ENCODE measurements at regions of chr14 and their contacts with region 1.

Region 1: DNA sequence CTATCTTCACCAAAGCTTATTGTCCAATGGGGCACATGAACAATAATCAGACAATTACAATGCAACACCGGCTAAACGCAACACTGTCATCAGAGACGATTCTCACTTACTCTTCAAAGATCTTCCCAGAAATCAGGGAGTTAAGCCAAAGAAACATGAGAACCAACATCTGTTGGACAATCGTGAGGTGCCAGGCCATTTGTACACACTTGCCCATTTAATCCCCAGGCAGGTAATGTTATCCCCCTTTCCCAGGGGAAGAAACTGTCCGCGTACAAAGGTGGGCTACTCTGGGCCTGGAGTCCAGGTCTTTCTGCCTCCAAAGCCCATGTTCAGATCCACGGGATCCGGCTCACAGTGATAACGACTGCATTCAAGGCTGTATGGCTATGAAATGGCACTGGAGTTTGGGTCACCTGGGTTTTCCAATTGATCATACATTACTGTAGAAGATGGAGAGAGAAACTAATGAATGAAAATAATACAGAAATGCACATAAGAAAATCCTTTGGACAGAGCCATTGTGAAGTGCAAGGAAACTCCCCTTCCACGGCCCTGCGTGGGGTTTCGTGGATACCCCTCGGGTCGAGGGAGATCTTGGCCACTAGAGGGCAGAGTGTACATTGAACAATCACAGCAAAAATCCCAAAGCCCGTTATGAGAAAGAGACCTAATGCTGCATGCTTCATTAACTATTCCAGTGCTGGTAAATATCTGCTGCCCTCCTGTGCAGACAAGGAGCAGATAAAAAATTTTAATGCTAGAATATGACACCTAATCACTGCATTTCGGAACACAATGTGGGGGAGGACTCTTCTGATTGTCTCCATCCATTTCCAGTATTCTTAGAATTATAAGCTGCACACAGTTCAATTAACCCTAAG is 111.4 kb downstream of the EGLN3 start:
- DNase-seq: no peak
- ATAC-seq: peak; percentile 84
- H3K4me3 ChIP-seq: no peak overlapping the region
- H3K27ac ChIP-seq: no peak overlapping the region
- H3K4me1 ChIP-seq: no peaks in the 10 kb centered on the region
- H3K27me3 ChIP-seq: peaks cover 0 to 3% of the 10 kb centered on the region in 2 experiments; a peak in 1 of 4 replicates
- CTCF ChIP-seq: peak; percentile 73 to 85 (median 77)
- EP300 ChIP-seq: no peak
- POLR2A ChIP-seq: no peak
- RAD21 ChIP-seq: peak; percentile 79

Region 2: DNA sequence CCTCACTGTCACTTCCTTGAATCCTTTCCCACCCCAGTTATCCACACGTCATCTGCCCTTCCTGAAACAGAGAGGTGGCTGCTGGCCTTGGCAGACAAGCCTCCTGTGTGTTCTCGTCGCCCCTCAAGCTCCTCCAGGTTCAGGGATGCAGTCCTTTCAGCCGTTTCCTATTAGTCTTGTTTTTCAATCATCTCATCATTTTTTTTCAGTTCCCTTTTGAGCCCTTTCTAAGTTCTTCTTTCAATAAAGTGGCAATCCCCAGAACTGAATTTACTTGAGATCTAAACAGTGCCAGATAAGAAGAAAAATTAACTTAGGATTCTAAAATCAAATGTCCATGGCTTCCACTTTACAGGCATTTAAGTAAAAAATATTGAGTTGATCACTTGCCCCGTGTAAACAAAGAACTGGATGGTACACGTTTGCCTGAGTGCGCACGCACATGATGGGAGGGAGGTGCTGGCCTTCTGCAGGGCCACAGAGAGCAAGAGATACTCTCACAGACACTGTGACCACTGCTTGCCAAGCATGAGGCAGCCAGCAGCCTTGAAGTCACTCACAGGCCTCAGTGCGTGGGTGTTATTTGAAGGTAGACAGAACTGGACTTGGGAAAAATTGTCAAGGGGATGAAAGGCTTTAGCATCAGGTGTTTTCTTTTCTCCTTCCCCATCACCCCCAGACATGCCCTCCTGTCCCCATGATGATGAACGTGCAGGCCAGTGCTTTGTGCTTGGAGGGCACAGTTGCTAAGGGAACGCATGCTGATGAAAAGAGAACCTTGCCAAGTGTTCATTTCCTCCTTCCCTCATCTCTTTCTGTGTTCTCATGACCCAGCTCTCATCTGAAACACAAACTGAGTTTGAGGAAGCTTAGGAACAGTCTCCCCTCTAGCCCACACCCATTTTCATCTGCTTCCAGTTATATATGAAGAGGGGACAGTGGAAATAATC is 296.8 kb before region 1 on chr14:
- CTCF ChIA-PET with region 1: no interaction called
- POLR2A ChIA-PET with region 1: no interaction called
- RAD21 ChIA-PET with region 1: no interaction called
- SMC1A ChIA-PET with region 1: no interaction called
- in situ Hi-C with region 1: no loop called
- intact Hi-C with region 1: no loop called
- DNase-seq: no peak
- ATAC-seq: peak; percentile 63
- H3K4me3 ChIP-seq: no peak overlapping the region
- H3K27ac ChIP-seq: no peak overlapping the region
- H3K4me1 ChIP-seq: peaks cover 5% of the 10 kb centered on the region; the same call in 1 of the 2 replicates
- H3K27me3 ChIP-seq: no peaks in the 10 kb centered on the region
- CTCF ChIP-seq: no peak
- EP300 ChIP-seq: no peak
- POLR2A ChIP-seq: no peak
- RAD21 ChIP-seq: no peak

Region 3: GRCh38 chr14:33764876-33765650 is 74.4 kb before region 1 on chr14:
- CTCF ChIA-PET with region 1: no interaction called
- POLR2A ChIA-PET with region 1: no interaction called
- RAD21 ChIA-PET with region 1: no interaction called
- SMC1A ChIA-PET with region 1: no interaction called
- in situ Hi-C with region 1: no loop called
- intact Hi-C with region 1: no loop called
- DNase-seq: no peak
- ATAC-seq: no peak
- H3K4me3 ChIP-seq: no peak overlapping the region
- H3K27ac ChIP-seq: no peak overlapping the region
- H3K4me1 ChIP-seq: no peaks in the 10 kb centered on the region
- H3K27me3 ChIP-seq: no peaks in the 10 kb centered on the region
- CTCF ChIP-seq: no peak
- EP300 ChIP-seq: no peak
- POLR2A ChIP-seq: no peak
- RAD21 ChIP-seq: no peak

Region 4: DNA sequence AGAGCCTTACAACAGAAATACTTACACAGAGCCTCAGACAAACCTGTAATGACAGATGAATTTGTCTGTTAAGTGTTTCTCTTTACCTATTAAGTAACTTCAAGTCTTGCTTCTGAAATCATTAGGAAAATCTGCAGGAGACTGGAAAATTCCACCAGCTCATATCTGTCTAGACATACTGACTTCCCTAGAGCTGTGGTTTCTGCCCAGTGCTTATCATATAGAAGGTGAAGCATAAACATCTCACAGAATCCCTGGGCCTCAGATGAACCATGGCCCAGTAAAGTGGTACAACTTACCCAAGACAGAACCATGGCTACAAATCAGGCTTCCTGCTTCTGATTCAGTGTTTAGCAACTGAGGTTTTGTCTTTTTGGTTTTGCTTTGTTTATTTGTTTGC is 19.9 kb after region 1 on chr14:
- CTCF ChIA-PET with region 1: interaction called, 12 read pairs
- POLR2A ChIA-PET with region 1: no interaction called
- RAD21 ChIA-PET with region 1: interaction called, 9 read pairs
- SMC1A ChIA-PET with region 1: interaction called, 13 read pairs
- in situ Hi-C with region 1: no loop called
- intact Hi-C with region 1: no loop called
- DNase-seq: no peak
- ATAC-seq: peak; percentile 28; the same call in 1 of the 3 replicates
- H3K4me3 ChIP-seq: no peak overlapping the region
- H3K27ac ChIP-seq: no peak overlapping the region
- H3K4me1 ChIP-seq: peaks cover 3% of the 10 kb centered on the region; the same call in 1 of the 2 replicates
- H3K27me3 ChIP-seq: no peaks in the 10 kb centered on the region
- CTCF ChIP-seq: no peak
- EP300 ChIP-seq: no peak
- POLR2A ChIP-seq: no peak
- RAD21 ChIP-seq: no peak

Region 5: GRCh38 chr14:33938131-33938949 is 98.9 kb after region 1 on chr14:
- CTCF ChIA-PET with region 1: interaction called, 7 read pairs
- POLR2A ChIA-PET with region 1: no interaction called
- RAD21 ChIA-PET with region 1: interaction called, 15 read pairs
- SMC1A ChIA-PET with region 1: interaction called, 12 read pairs
- in situ Hi-C with region 1: no loop called
- intact Hi-C with region 1: no loop called
- DNase-seq: peak; percentile 36
- ATAC-seq: no peak
- H3K4me3 ChIP-seq: no peak overlapping the region; the same call in 1 of the 2 replicates
- H3K27ac ChIP-seq: no peak overlapping the region
- H3K4me1 ChIP-seq: no peaks in the 10 kb centered on the region
- H3K27me3 ChIP-seq: no peaks in the 10 kb centered on the region
- CTCF ChIP-seq: no peak
- EP300 ChIP-seq: no peak
- POLR2A ChIP-seq: no peak
- RAD21 ChIP-seq: no peak

Region 6: DNA sequence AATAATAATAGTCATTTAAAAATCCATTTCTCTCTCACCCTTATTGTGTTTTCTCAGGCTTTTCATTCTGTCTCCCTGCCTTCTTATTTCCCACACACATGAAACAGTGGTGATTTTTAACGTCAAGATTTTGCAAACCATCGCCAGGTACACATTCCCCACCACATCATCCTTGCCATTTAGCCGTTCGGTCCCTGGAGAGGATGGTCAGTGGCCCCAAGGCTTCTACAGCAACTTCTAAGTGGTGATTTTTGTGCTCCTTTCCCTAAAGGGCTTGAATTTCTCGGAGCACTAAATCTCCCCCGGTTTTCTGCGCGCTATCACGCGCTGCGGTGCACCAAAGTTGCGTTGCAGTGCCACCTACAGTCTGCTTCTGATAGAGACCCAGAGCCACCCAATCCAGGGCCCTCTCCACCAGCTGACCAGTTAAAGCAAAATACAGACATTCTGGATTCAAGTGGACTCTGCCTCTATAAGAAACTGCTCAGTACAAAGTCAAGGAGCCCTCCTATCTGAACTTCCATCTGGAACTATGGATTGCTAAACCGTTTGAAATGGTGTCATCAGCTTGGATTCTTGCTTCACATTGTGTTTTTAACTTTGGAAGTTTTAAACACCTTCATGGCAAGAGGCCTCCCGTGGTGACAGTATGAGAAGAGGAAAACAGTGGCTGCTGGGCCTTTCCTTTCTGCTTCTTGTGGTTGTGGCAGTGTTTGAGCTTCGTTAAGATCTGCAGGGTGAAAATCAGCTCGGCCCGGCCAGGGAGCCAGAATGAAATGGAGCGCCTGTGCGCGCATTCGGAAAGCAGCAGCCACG is 388.6 kb after region 1 on chr14:
- CTCF ChIA-PET with region 1: interaction called, 196 read pairs
- POLR2A ChIA-PET with region 1: no interaction called
- RAD21 ChIA-PET with region 1: interaction called, 42 read pairs
- SMC1A ChIA-PET with region 1: interaction called, 52 read pairs
- in situ Hi-C with region 1: loop called (anchors 5 kb)
- intact Hi-C with region 1: loop called (anchors 1 kb)
- DNase-seq: no peak
- ATAC-seq: peak; percentile 96
- H3K4me3 ChIP-seq: no peak overlapping the region
- H3K27ac ChIP-seq: no peak overlapping the region
- H3K4me1 ChIP-seq: no peaks in the 10 kb centered on the region
- H3K27me3 ChIP-seq: peaks cover 0 to 2% of the 10 kb centered on the region in 2 experiments; a peak in 1 of 4 replicates
- CTCF ChIP-seq: peak; percentile 71 to 78 (median 72); a peak in 5 of 6 replicates
- EP300 ChIP-seq: no peak
- POLR2A ChIP-seq: no peak
- RAD21 ChIP-seq: peak; percentile 81

Region 7: DNA sequence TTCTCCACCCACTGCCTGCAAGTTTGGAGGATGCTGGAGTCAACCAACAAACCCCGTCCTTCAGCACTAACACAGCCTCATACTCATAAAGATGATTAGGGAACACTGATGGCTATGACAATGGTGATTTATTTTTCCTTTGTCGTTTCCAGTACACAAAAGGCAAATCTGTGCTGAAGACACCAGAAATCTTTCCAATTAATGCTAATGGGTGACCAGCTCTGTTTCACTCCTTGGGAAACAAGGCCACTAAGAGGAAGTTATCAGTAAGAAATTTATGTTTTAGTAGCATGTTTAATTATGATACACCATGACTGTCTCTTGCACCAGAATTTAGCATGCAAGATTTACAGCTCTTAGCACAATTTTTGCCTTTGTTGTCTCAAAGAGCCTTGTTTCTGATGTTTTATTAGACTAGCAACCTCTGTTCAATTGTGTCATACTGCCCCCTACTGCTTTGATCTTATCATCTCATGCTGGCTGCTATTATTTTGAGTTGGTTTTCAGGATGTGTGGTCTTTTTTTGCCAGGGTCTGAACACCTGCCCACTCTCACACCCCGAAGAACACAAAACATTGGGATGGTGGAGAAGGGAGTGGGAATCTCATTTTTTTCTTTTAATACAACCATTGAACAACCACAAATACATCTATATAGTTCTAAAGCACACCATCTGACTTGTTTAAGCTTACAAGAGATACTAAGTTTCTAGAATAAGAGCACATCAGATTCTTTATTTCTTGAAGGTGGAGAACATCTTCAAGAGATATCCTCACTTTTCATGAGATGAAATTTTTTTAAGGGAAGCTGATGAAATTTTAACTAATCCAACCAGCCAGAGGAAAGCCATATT is 461.7 kb after region 1 on chr14:
- CTCF ChIA-PET with region 1: interaction called, 76 read pairs
- POLR2A ChIA-PET with region 1: no interaction called
- RAD21 ChIA-PET with region 1: interaction called, 18 read pairs
- SMC1A ChIA-PET with region 1: interaction called, 12 read pairs
- in situ Hi-C with region 1: loop called (anchors 5 kb)
- intact Hi-C with region 1: loop called (anchors 2 kb)
- DNase-seq: peak; percentile 7
- ATAC-seq: peak; percentile 67
- H3K4me3 ChIP-seq: no peak overlapping the region
- H3K27ac ChIP-seq: no peak overlapping the region
- H3K4me1 ChIP-seq: no peaks in the 10 kb centered on the region
- H3K27me3 ChIP-seq: no peaks in the 10 kb centered on the region
- CTCF ChIP-seq: peak; percentile 51 to 59 (median 56); a peak in 5 of 6 replicates
- EP300 ChIP-seq: no peak
- POLR2A ChIP-seq: no peak
- RAD21 ChIP-seq: peak; percentile 62